ENCODE measurements at regions of chr3 and their contacts with region 1.

Region 1: GRCh38 chr3:28348629-28349483 is at the starts of genes AZI2 and ZCWPW2:
- DNase-seq: peak; percentile 97
- ATAC-seq: peak; percentile 97
- total RNA-seq, gene AZI2: 42.6 TPM
- total RNA-seq, gene ZCWPW2: 2.0 TPM

Region 2: DNA sequence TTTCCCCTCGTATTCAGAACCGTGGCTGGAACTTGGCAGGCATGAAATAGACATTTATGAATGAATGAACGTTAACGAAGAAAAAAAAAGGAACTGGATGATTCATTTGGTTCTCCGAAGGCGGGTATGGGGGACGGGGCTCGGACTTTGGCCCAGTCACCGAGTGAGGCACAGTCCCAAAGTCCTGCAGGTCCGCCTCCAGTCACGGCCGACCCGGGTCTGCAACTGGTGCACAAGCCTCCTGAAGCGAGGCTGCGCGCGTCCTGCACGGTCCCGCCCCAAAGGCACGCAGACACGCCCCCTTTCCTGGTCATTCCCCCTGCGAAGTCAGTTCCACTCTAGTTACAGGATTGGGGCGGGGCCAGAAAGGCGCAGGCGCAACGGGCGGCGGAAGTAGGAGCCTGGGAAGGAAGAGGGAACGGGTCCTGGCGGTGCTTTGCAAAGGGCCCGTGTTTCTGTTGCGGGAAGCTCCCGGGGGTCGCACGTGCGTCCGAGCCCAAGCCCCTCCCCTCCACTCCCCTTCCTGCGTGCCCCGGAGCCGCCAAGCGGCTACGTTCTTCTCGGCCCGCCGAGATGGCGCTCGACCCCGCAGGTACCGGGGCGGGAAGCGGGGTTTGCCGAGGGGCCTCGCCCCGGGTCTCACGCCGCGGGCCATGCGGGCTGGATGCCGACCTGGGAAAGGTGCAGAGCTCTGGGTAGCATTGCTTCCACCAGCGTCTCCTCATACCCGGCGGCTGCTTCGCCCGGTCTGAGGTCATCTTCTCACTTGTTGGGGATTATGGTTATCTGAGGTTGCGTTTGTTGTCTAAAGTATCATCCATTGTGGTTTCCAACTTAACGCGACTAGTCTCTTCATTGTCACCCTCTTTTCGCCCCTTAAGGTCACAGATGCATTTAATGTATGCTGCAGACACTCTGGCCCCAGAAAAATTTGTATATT is 107.4 kb before region 1 on chr3 and contains the start of gene CMC1:
- intact Hi-C with region 1: loop called (anchors 2 kb)
- DNase-seq: peak; percentile 99
- ATAC-seq: peak; percentile 100
- total RNA-seq, gene CMC1: 35.7 TPM